Cardiac septum (tissue), 1 donor: ENCODE measurements at regions of chr2 and their contacts with region 1.

Region 1: GRCh38 chr2:26345545-26346453 is at the start of gene SELENOI:
- DNase-seq: peak; percentile 100
- total RNA-seq, gene SELENOI: 14.5 TPM

Region 2: DNA sequence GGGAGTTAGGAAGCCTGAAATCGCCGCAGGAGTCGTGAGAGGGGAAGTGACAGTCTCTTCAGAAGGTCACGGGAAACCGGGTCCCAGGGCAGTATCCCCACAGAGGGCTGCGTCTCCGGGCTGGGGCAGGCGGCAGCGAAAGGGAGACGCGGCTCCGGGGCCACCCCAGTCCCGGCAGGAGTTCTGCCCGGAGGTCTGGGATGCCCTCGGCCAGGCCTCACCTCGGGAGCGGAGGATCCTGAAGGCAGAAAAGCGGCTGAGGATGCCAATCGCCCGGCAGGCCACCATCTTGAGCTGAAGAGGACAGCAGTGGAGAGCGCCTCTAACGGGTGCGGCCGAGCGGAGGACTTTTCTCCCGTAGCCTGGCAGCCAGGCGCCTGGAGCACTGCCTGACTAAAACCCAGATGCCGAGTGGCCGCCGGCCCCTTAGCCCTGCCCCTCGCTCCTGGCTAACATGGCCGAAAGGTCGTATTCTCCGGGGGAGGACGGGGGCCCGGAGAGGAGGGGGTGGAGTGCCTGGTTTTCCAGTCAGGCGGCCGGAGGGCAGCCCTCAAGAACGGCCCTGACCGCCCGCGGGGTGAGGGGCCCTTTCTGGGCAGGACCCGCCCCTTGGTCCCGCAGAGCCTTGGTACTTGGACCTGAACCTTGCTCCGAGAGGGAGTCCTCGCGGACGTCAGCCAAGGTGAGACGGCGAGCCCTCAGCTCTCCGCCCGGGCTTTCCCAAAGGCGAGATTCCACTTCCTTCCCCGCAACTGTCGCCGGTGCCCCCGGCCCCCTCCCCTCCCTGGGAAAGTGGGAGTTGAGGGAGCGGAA is 101.3 kb before region 1 on chr2 and contains the starts of genes HADHA and HADHB:
- intact Hi-C with region 1: loop called (anchors 2 kb)
- DNase-seq: peak; percentile 95
- total RNA-seq, gene HADHA: 244 TPM
- total RNA-seq, gene HADHB: 532 TPM

Region 3: GRCh38 chr2:26577434-26578112 is 231.8 kb after region 1 on chr2:
- intact Hi-C with region 1: loop called (anchors 10 kb)
- DNase-seq: no peak